ENCODE measurements at regions of chr4 and their contacts with region 1.

Region 1: GRCh38 chr4:128287871-128288688 is 467 bp upstream of the PGRMC2 start:
- DNase-seq: peak; percentile 100
- H3K4me3 Mint-ChIP-seq: peak overlapping the region; percentile 76
- H3K27ac Mint-ChIP-seq: peak overlapping the region; percentile 92
- H3K4me1 Mint-ChIP-seq: peaks cover 27% of the 10 kb centered on the region
- H3K27me3 Mint-ChIP-seq: no peaks in the 10 kb centered on the region

Region 2: DNA sequence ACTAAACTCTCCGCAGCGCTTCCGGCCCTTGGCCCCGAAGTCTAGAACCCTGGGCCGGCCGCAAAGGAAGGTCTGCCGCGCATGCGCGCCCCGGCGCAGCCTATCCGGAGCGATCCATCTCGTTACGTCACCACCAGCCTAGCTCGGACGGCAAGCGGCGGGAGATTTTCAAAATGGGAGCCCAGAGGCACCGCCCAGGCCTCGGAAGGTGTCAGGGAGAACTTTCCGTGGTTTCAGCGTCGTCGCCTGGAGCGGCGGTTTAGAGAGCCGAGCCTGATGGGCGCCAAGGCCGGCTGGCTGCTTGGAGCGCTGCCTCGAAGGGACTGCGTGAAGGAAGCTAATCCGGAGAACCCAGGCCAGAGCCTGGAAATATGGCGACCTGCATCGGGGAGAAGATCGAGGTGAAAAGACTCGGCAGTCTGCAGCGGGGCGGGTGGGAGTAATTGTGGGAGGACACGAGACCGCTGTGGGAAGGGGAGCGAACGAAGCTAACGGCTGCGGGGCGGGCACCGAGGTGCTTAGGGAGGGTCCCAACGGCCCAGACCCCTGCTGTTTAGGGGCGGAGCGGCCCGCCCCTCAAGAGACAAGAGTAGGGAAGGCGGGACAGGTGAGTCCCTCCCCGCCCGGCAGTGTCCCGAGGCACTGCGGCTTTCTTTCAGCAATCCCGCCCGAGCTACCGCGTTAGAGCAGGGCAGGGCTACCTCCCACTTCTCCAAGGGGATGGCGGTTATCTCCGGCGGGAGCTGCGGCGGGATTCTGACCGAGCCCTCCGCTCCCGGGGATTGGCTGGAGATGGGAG is 407.1 kb before region 1 on chr4 and contains the start of gene PLK4:
- CTCF ChIA-PET with region 1: no interaction called
- intact Hi-C with region 1: loop called (anchors 1 kb)
- DNase-seq: peak; percentile 97
- H3K4me3 Mint-ChIP-seq: peak within 1 kb of the TSS; percentile 98
- H3K27ac Mint-ChIP-seq: peak within 1 kb of the TSS; percentile 98
- H3K4me1 Mint-ChIP-seq: peaks cover 18% of the 10 kb centered on the region
- H3K27me3 Mint-ChIP-seq: peaks cover 3% of the 10 kb centered on the region
- total RNA-seq, gene PLK4: 44.7 to 52.3 TPM

Region 3: DNA sequence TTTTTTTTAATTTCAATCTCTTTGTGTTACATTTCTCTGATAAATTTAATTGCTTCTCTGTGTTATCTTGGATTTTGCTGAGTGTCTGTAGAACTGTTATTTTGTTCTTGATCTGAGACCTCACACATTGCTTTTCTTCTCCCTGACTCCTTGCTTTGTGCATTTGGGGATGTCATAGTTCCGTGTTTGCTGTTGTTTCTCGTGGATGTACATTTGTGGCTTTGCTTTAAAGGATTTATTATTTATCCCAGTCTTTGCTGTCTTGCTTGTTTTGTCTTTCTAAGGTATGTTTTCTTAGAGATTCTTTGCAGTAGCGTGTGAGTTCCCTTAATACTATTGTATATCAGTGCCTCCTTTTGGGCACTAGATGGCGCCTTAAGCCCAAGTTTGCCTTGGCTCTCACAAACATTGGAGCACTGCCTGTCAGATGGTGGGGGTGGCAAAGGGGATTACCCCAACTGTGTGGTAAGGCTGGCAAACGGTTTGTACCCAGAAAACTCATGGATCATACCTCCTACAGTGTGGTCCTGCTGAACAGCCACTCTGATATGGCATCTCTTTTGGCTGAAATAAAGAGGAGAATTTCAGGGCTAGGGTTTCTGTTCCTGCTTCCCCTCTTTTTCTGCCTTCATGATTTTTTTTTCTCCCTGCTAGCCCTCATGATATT is 96.8 kb before region 1 on chr4:
- CTCF ChIA-PET with region 1: interaction called, 3 read pairs
- intact Hi-C with region 1: loop called (anchors 1 kb)
- DNase-seq: peak; percentile 84
- H3K4me3 Mint-ChIP-seq: no peak overlapping the region
- H3K27ac Mint-ChIP-seq: no peak overlapping the region
- H3K4me1 Mint-ChIP-seq: no peaks in the 10 kb centered on the region
- H3K27me3 Mint-ChIP-seq: no peaks in the 10 kb centered on the region

Region 4: GRCh38 chr4:128553686-128554515 is 265.8 kb after region 1 on chr4:
- CTCF ChIA-PET with region 1: no interaction called
- intact Hi-C with region 1: loop called (anchors 5 kb)
- DNase-seq: no peak
- H3K4me3 Mint-ChIP-seq: peak overlapping the region; percentile 73
- H3K27ac Mint-ChIP-seq: no peak overlapping the region
- H3K4me1 Mint-ChIP-seq: peaks cover 13% of the 10 kb centered on the region
- H3K27me3 Mint-ChIP-seq: peaks cover 7% of the 10 kb centered on the region

Region 5: GRCh38 chr4:128863312-128864075 is 575.4 kb after region 1 on chr4:
- CTCF ChIA-PET with region 1: interaction called, 3 read pairs
- intact Hi-C with region 1: loop called (anchors 2 kb)
- DNase-seq: peak; percentile 75
- H3K4me3 Mint-ChIP-seq: no peak overlapping the region
- H3K27ac Mint-ChIP-seq: peak overlapping the region; percentile 62
- H3K4me1 Mint-ChIP-seq: peaks cover 48% of the 10 kb centered on the region
- H3K27me3 Mint-ChIP-seq: no peaks in the 10 kb centered on the region